Activated CD4-positive, alpha-beta memory T cell treated with anti-CD3 and anti-CD28 coated beads, Interleukin-2, amount 10 ng/mL, durations not matched to agents 7 days and 5 days (primary cell): ENCODE measurements at regions of chr19 and their contacts with region 1.

Region 1: DNA sequence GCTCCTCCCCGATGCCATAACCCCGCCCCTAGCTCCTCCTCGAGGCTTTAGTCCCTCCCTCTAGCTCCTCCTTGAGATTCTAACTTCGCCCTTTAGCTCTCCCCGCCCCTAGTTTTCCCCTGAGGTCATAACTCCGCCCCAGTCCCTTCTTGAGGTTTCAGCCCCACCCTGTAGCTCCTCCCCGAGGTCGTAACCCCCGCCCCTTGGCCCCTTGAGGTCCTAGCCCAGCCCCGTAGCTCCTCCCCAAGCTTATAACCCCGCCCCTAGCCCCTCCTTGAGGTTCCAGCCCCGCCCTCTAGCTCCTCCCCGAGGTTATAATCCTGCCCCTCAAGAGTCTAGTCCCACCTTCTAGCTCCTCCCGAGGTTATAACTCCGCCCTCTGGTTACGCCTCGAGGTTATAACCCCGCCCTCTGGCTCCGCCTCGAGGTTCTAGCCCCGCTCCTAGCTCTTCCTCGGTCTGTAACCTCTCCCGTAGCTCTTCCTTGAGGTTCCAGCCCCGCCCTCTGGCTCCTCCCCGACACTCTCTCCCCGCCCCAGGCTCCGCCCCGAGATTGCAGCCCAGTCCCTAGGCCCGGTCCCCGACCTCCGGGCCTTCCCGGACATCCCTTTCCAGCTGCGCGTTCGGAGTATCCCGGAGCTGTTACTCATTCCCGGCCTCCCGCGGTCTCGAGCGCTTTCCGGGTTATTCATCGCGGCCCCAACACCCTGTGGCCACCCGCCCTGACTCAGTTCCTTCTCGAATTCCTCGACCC is 1.4 kb downstream of the PLAUR start:
- DNase-seq: peak; percentile 99
- H3K4me3 Mint-ChIP-seq: peak overlapping the region; percentile 79
- H3K27ac Mint-ChIP-seq: peak overlapping the region; percentile 55
- H3K4me1 Mint-ChIP-seq: peaks cover 49% of the 10 kb centered on the region
- H3K27me3 Mint-ChIP-seq: peaks cover 10% of the 10 kb centered on the region

Region 2: DNA sequence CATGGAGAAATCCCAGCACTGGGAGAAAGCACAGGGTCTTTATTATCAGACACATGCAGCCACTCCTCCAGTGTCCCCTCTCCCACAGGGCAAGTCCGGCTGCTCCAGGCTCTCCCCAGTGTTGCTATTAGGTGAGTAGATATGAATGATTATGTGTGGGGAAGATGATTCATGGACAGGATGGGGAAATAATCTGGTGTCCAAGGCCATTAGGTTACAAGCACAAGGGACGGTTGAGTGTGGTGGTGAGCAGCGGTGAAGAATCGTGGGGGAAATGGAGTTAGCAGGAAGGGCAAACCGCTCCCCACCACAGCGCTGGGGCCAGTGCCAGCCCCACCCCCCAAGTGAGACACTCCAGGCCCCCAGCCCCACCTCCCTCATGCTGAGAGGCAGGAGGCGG is 296.1 kb before region 1 on chr19:
- CTCF ChIA-PET with region 1: no interaction called
- POLR2A ChIA-PET with region 1: no interaction called
- DNase-seq: no peak
- H3K4me3 Mint-ChIP-seq: no peak overlapping the region
- H3K27ac Mint-ChIP-seq: no peak overlapping the region
- H3K4me1 Mint-ChIP-seq: no peaks in the 10 kb centered on the region
- H3K27me3 Mint-ChIP-seq: no peaks in the 10 kb centered on the region

Region 3: DNA sequence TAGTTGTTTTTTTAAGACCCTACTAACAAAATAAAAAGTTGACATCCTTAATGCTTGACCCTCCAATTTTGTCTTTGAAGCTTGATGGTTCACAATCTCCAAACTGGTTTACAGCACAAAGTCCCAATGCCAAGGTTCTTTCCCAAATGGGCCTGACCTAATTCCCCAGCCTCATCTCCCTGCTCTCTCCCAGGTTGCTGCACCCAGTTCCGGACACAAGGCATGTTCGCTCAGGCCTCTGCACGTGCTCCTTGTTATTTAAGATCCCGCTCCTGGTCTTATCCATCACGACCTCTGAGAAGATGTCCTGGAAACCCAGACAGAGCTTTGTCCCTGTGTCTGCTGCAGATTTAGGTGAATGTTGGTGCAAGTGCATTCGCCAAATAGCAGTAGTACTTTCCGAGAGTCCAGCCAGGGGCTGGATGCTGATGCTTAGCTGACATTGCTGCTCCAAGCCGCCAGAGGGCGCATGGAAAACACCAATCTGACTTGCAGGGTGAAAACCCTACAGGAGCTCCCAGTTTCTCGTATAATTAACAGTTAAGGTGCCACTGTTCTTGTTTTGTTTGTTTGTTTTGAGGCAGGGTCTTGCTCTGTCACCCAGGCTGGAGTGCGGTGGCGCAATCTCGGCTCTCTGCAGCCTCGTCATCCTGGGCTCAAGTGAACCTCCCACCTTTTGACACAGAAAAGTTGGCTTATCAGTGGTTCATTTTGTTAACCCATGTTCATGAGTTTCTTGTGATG is 221.7 kb before region 1 on chr19:
- CTCF ChIA-PET with region 1: interaction called, 11 read pairs
- POLR2A ChIA-PET with region 1: no interaction called
- DNase-seq: peak; percentile 82
- H3K4me3 Mint-ChIP-seq: no peak overlapping the region
- H3K27ac Mint-ChIP-seq: no peak overlapping the region
- H3K4me1 Mint-ChIP-seq: peaks cover 25% of the 10 kb centered on the region
- H3K27me3 Mint-ChIP-seq: no peaks in the 10 kb centered on the region

Region 4: DNA sequence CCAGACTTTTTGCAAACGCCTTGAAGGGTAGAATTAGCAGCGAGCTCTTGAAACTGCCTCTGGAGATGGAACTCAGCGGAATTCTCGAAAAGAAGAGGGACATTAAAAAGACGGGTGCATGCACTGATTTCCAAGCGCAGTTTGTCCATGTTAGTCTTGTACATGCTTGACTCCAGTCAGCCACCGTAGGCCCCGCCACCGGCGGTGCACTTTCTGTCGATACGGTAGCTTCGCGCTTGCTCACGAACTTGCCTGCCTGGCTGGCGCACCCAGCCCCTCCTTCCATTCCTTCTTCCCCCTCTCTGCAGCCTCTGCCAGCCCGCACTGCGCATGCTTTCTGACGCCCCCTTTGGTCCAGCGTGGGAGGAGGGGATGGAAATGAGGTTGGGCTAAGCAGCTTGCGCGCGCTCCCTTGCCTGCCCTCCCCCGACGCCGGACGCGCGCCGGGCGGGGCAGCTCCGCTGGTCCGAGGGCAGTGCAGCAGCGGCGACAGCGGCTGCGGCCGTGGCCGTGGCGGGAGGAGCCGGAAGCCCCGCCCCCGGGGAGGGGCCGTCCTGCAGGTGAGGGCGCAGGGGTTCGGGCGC is 135.5 kb before region 1 on chr19 and contains the start of gene ZNF575:
- CTCF ChIA-PET with region 1: interaction called, 11 read pairs
- POLR2A ChIA-PET with region 1: interaction called, 3 read pairs
- DNase-seq: peak; percentile 89
- H3K4me3 Mint-ChIP-seq: peak within 1 kb of the TSS; percentile 86
- H3K27ac Mint-ChIP-seq: peak within 1 kb of the TSS; percentile 98
- H3K4me1 Mint-ChIP-seq: peaks cover 26% of the 10 kb centered on the region
- H3K27me3 Mint-ChIP-seq: no peaks in the 10 kb centered on the region
- total RNA-seq, gene ZNF575: 4.1 to 4.8 TPM

Region 5: DNA sequence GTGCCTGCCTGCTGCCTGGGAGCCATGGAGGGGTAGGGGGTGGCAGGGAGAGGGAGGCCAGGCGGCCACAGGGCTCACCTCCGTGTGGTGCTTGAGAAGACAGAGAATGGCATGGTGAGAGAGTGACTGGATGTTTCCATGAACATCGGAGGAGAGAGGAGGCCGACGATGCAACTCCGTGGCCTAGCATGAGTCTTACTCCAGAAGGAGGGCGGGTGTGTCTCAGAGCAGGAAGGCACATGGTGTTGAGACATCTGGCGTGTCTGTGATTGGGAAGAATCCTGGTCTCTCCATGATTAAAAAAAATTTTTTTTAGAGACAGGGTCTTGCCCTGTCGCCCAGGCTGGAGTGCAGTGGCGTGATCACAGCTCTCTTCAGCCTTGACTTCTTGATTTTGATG is 52.4 kb after region 1 on chr19:
- CTCF ChIA-PET with region 1: interaction called, 11 read pairs
- POLR2A ChIA-PET with region 1: no interaction called
- DNase-seq: no peak
- H3K4me3 Mint-ChIP-seq: no peak overlapping the region
- H3K27ac Mint-ChIP-seq: no peak overlapping the region
- H3K4me1 Mint-ChIP-seq: no peaks in the 10 kb centered on the region
- H3K27me3 Mint-ChIP-seq: no peaks in the 10 kb centered on the region

Region 6: DNA sequence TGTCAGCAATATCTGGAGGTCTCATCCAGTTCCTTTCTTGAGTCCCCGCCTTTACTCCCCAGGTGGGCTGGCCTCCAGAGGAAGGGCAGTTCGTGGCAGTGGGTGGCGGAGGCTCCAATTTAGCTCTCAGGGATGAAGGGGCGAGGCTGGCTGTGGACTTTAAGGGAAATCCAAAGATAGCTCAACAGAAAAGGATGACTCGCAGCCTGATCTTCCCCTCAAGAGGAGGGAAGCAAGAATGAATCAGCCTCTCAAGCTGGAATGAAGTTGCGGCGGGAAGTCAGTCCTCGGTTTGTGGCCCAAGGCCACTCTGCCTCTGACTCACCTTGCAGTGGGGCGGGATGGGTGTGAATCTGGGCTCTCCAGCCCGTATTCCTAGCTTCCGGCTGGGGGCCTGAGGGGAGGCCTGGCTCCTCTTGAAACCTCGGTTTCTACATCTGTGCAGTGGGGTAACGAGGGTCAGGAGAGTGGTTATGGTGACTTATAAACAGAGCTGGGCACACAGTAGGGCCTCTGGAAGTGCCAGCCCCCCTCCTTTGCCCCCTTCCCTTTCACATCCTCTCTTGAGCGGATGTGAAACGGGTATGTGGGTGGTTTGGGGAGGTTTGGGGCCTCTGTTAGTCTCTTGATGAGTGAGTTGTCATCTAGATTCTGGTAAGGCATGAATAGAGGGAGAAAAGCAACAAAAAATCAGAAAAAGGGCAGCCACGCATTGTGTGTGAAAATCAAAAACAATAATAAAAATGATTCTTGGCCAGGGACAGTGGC is 96.7 kb after region 1 on chr19:
- CTCF ChIA-PET with region 1: interaction called, 21 read pairs
- POLR2A ChIA-PET with region 1: interaction called, 6 read pairs
- DNase-seq: peak; percentile 91
- H3K4me3 Mint-ChIP-seq: peak overlapping the region; percentile 56
- H3K27ac Mint-ChIP-seq: peak overlapping the region; percentile 96
- H3K4me1 Mint-ChIP-seq: peaks cover 69% of the 10 kb centered on the region
- H3K27me3 Mint-ChIP-seq: no peaks in the 10 kb centered on the region

Region 7: GRCh38 chr19:43784981-43785808 is 116.6 kb after region 1 on chr19:
- CTCF ChIA-PET with region 1: interaction called, 11 read pairs
- POLR2A ChIA-PET with region 1: interaction called, 18 read pairs
- DNase-seq: peak; percentile 65
- H3K4me3 Mint-ChIP-seq: peak overlapping the region; percentile 18
- H3K27ac Mint-ChIP-seq: peak overlapping the region; percentile 89
- H3K4me1 Mint-ChIP-seq: peaks cover 46% of the 10 kb centered on the region
- H3K27me3 Mint-ChIP-seq: peaks cover 5% of the 10 kb centered on the region